IMR-90 (cell line): ENCODE measurements at regions of chrX and their contacts with region 1.

Region 1: GRCh38 chrX:132219343-132219768 is at the start of gene RAP2C:
- DNase-seq: peak; percentile 54
- ATAC-seq: peak; percentile 42
- H3K4me3 ChIP-seq: peak within 1 kb of the TSS; percentile 88
- H3K27ac ChIP-seq: peak within 1 kb of the TSS; percentile 76
- H3K4me1 ChIP-seq: no peaks in the 10 kb centered on the region
- H3K27me3 ChIP-seq: peaks cover 2% of the 10 kb centered on the region; the same call in 1 of the 2 replicates
- CTCF ChIP-seq: peak; percentile 53
- POLR2A ChIP-seq: no peak
- RAD21 ChIP-seq: peak; percentile 49
- total RNA-seq, gene RAP2C: 24.4 and 24.9 TPM in 2 replicates

Region 2: DNA sequence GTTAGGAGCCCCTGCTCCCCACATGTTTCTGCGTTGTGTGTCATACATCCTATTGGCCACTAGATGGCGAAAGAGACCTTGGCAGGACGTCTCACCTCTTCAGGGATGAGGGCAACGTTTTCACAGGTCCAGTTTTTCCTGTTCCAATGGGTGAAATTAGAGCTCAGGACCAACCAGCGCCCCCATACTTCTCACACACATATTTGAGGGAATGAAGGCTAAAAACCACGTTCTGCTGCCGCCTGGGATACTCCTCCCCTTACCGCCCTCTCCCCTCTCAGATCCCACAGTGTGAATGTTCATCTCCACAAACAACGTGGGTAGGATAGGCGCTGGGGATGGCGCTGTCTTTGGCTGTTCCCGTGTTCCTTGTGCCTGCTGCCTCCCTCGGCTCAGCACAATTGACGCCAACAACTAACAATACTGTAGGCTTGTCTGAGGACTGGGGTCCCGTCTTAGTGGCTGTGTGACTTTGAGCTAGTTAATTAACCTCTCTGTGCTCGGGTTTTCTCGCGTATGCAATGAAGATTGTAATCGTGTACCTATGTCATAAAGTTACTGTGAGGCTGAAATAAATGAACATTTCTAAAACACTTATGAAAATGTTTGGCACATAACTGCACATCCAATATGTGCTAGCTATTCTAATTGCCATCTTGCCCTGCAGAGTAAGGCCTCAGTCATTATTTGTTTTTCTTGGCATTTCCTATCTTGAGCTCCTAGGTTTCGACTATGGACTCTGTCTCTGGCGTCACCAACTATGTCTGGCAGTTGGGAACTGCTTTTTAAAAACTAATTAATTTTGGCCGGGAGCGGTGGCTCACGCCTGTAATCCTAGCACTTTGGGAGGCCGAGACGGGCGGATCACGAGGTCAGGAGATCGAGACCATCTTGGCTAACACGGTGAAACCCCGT is 377.6 kb before region 1 on chrX:
- CTCF ChIA-PET with region 1: interaction called, 3 read pairs
- POLR2A ChIA-PET with region 1: no interaction called
- dilution Hi-C with region 1: no loop called
- in situ Hi-C with region 1: no loop called
- intact Hi-C with region 1: loop called (anchors 1 kb)
- DNase-seq: peak; percentile 38
- ATAC-seq: peak; percentile 88
- H3K4me3 ChIP-seq: no peak overlapping the region
- H3K27ac ChIP-seq: no peak overlapping the region
- H3K4me1 ChIP-seq: no peaks in the 10 kb centered on the region
- H3K27me3 ChIP-seq: peaks cover 8% of the 10 kb centered on the region
- CTCF ChIP-seq: peak; percentile 68
- POLR2A ChIP-seq: no peak
- RAD21 ChIP-seq: peak; percentile 73

Region 3: GRCh38 chrX:132092439-132093065 is 126.8 kb before region 1 on chrX:
- CTCF ChIA-PET with region 1: interaction called, 22 read pairs
- POLR2A ChIA-PET with region 1: no interaction called
- dilution Hi-C with region 1: no loop called
- in situ Hi-C with region 1: no loop called
- intact Hi-C with region 1: loop called (anchors 1 kb)
- DNase-seq: peak; percentile 61
- ATAC-seq: peak; percentile 94
- H3K4me3 ChIP-seq: no peak overlapping the region
- H3K27ac ChIP-seq: no peak overlapping the region
- H3K4me1 ChIP-seq: no peaks in the 10 kb centered on the region
- H3K27me3 ChIP-seq: peaks cover 11% of the 10 kb centered on the region
- CTCF ChIP-seq: peak; percentile 67
- POLR2A ChIP-seq: no peak
- RAD21 ChIP-seq: peak; percentile 62

Region 4: GRCh38 chrX:132231587-132231986 is 12.2 kb after region 1 on chrX:
- CTCF ChIA-PET with region 1: interaction called, 3 read pairs
- POLR2A ChIA-PET with region 1: interaction called, 13 read pairs
- dilution Hi-C with region 1: no loop called
- in situ Hi-C with region 1: no loop called
- intact Hi-C with region 1: no loop called
- DNase-seq: no peak
- ATAC-seq: no peak
- H3K4me3 ChIP-seq: no peak overlapping the region
- H3K27ac ChIP-seq: no peak overlapping the region
- H3K4me1 ChIP-seq: peaks cover 2% of the 10 kb centered on the region; the same call in 1 of the 2 replicates
- H3K27me3 ChIP-seq: peaks cover 2% of the 10 kb centered on the region; the same call in 1 of the 2 replicates
- CTCF ChIP-seq: no peak
- POLR2A ChIP-seq: no peak
- RAD21 ChIP-seq: no peak

Region 5: GRCh38 chrX:132443161-132444135 is 224.1 kb after region 1 on chrX:
- CTCF ChIA-PET with region 1: no interaction called
- POLR2A ChIA-PET with region 1: no interaction called
- dilution Hi-C with region 1: no loop called
- in situ Hi-C with region 1: no loop called
- intact Hi-C with region 1: no loop called
- DNase-seq: no peak
- ATAC-seq: no peak
- H3K4me3 ChIP-seq: no peak overlapping the region
- H3K27ac ChIP-seq: no peak overlapping the region
- H3K4me1 ChIP-seq: no peaks in the 10 kb centered on the region
- H3K27me3 ChIP-seq: no peaks in the 10 kb centered on the region; the same call in 1 of the 2 replicates
- CTCF ChIP-seq: no peak
- POLR2A ChIP-seq: no peak
- RAD21 ChIP-seq: no peak

Region 6: DNA sequence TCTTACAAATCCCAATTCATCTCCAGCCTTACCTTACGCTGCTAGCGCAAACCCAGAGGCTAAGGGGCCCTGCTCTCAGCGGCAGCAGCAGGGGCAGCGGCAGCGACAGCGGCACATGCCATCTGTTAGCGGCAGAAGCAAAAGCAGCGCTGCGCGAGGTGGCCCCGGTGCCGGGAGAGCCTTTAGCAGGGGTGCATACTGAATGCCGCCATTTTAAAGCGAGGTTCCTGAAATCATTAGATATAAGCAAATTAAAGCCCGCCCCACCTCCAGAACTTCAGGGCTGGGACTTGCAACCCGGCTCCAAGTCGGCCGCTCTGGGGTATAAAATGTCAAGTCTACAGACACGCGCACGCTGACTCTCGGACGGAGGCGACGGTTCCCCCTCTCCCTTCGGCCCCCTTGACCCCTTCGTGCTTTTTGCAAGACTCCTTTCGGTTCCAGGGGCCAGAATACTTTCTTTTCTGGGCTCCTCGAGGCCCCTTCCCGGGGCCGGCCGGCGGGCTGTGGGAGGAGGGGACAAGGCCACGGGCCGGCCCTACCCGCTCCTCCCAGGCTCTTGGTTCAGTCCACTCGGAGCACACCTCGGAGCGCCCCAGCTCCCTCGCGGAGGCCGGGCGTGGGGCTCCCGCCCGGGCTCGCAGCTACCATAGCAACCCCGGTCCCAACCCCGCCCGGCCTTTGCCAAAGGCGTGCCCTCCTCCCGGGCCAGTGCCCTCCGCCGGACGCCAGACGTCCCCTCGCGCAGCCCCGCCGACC is 269.6 kb after region 1 on chrX and contains the start of gene MBNL3:
- CTCF ChIA-PET with region 1: no interaction called
- POLR2A ChIA-PET with region 1: no interaction called
- dilution Hi-C with region 1: no loop called
- in situ Hi-C with region 1: no loop called
- intact Hi-C with region 1: loop called (anchors 5 kb)
- DNase-seq: peak; percentile 5
- ATAC-seq: peak; percentile 88
- H3K4me3 ChIP-seq: peak within 1 kb of the TSS; percentile 46
- H3K27ac ChIP-seq: no peak within 1 kb of the TSS
- H3K4me1 ChIP-seq: no peaks in the 10 kb centered on the region
- H3K27me3 ChIP-seq: peaks cover 19% of the 10 kb centered on the region
- CTCF ChIP-seq: no peak
- POLR2A ChIP-seq: no peak
- RAD21 ChIP-seq: no peak
- total RNA-seq, gene MBNL3: 1.1 TPM in 2 replicates